ENCODE measurements at regions of chr7 and their contacts with region 1.

Region 1: DNA sequence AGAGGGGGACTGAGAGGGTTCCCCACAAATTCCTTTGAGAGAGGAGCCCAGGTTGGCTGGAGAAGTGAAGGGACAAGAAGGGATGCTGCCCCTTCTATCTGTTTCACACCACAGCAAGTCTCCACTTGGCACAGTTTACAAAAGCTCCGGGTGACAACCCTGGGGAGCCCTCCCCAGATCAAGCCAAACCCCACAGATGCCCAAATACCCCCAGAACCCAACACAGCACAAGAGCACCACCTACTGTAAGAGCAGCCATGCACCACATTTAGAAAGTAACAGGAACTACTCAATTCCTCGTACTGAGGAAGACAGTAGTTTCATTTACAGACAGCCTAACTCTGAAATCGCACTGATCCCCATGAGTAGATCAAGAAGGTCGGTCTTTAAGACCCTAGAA is 67.8 kb upstream of the ATP6V0A4 start:
- DNase-seq: peak; percentile 66
- ATAC-seq: peak; percentile 84
- H3K4me3 Mint-ChIP-seq: no peak overlapping the region
- H3K27ac Mint-ChIP-seq: no peak overlapping the region
- H3K4me1 Mint-ChIP-seq: peaks cover 16% of the 10 kb centered on the region
- H3K27me3 Mint-ChIP-seq: no peaks in the 10 kb centered on the region

Region 2: DNA sequence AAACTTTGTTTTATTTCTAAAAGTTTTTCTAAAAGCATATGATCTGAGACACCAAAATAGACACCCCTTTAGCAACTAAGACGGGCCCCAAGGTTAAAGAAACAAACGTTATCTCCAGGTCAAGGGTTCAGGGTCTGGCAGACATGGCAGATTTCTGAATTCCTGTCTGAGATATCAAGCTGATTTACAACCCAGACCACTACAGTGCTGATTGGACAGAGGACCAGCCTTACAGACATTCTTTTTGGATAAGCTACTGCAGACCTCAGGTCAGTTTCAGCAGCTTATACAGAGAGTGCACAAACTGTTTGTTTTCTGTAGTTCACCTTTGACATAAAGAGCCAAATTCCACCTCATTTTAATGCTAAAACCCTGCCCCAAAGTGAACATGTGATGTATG is 199.5 kb before region 1 on chr7:
- CTCF ChIA-PET with region 1: no interaction called
- POLR2A ChIA-PET with region 1: no interaction called
- intact Hi-C with region 1: loop called in 1 of 2 experiments (anchors 5 kb)
- DNase-seq: no peak
- ATAC-seq: no peak
- H3K4me3 Mint-ChIP-seq: no peak overlapping the region
- H3K27ac Mint-ChIP-seq: no peak overlapping the region
- H3K4me1 Mint-ChIP-seq: peaks cover 13% of the 10 kb centered on the region
- H3K27me3 Mint-ChIP-seq: peaks cover 17% of the 10 kb centered on the region